Common myeloid progenitor, CD34-positive (primary cell): ENCODE measurements at regions of chr4 and their contacts with region 1.

Region 1: DNA sequence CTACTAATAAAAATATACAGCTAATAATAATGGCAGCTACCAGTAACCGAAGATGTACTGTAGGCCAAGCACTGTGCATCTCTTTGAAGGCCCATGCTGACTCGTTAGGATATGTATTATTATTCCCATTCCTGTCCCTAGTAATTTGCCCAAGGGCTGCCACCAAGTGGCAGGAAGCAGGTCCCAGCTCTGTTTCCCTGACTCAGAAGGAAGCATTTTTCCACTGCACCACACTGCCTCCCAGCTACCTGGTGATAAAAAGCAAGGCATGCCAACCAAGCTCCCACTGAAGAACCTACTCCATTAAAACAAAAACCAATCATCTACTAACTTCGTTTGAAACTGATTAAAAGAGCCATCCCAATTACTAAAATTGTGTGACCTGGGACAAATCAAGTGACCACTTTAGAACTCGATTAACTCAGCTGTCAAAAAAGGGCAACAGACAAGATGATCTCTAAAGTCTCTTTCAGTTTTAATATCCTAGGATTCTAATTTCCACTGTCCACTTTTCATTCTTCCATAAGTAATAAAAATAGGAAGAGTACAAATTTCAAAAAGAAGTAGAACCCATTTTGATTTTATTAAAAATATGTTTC is 24.3 kb upstream of the PGM2 start:
- DNase-seq: no peak
- H3K4me3 ChIP-seq: no peak overlapping the region
- H3K27ac ChIP-seq: no peak overlapping the region
- H3K4me1 ChIP-seq: peaks cover 0 to 3% (median 0%) of the 10 kb centered on the region in 4 experiments
- H3K27me3 ChIP-seq: no peaks in the 10 kb centered on the region

Region 2: GRCh38 chr4:37826295-37827029 is 24.3 kb after region 1 on chr4 and contains the start of gene PGM2:
- CTCF ChIA-PET with region 1: interaction called, 13 read pairs
- POLR2A ChIA-PET with region 1: no interaction called
- DNase-seq: peak; percentile 90 to 98 (median 97)
- H3K4me3 ChIP-seq: peak within 1 kb of the TSS; percentile 87 to 98 (median 97)
- H3K27ac ChIP-seq: peak within 1 kb of the TSS; percentile 75 to 86
- H3K4me1 ChIP-seq: peaks cover 11 to 30% (median 20%) of the 10 kb centered on the region in 4 experiments
- H3K27me3 ChIP-seq: no peaks in the 10 kb centered on the region

Region 3: DNA sequence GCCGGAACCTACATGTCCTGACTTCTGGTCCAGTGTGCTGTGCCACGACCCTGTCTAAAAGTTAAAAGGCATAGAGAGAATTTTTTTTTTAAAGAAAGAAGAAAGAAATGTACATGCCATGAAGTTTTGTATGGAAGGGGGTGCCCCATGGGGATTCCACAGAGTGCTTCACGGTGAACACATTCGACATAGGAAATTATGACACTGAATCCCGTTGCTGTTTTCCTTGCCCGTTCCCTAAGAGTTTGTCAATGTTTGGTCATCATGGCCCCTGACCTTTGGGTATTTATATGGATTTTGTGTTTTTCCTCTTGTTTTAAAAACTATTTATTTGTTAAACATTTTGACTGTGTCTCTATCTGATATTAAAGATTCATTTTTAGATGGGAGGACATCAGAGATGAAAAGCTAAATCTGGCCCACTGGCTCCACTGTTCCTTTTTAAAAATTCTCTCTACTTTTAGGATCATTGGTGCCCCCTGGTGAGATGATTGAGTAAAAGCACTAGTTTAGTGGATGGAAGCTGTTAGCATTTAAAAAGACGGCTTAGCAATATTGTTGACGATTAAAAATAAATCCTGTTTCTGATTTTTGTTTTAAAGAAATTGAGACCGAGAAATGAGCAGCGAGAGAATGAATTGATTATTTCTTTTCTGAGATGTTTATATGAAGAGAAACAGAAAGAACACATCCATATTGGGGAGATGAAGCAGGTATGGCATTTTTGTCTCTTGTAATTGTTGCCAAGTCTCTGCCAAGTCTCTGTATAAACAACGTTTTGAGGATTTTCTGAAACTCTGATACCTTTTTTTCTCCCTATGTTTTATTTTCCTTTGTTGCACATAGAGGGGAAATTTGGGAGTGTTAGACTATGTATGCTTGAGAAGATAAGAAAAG is 233.1 kb after region 1 on chr4:
- CTCF ChIA-PET with region 1: interaction called, 44 read pairs
- POLR2A ChIA-PET with region 1: no interaction called
- DNase-seq: peak; percentile 65 to 84 (median 79)
- H3K4me3 ChIP-seq: no peak overlapping the region
- H3K27ac ChIP-seq: no peak overlapping the region
- H3K4me1 ChIP-seq: peaks cover 0 to 1% (median 0%) of the 10 kb centered on the region in 4 experiments
- H3K27me3 ChIP-seq: no peaks in the 10 kb centered on the region